ENCODE measurements at regions of chr1 and their contacts with region 1.

Region 1: GRCh38 chr1:1406817-1407635 is at the start of gene MRPL20:
- DNase-seq: peak; percentile 98
- ATAC-seq: peak; percentile 98
- total RNA-seq, gene MRPL20: 140 TPM

Region 2: DNA sequence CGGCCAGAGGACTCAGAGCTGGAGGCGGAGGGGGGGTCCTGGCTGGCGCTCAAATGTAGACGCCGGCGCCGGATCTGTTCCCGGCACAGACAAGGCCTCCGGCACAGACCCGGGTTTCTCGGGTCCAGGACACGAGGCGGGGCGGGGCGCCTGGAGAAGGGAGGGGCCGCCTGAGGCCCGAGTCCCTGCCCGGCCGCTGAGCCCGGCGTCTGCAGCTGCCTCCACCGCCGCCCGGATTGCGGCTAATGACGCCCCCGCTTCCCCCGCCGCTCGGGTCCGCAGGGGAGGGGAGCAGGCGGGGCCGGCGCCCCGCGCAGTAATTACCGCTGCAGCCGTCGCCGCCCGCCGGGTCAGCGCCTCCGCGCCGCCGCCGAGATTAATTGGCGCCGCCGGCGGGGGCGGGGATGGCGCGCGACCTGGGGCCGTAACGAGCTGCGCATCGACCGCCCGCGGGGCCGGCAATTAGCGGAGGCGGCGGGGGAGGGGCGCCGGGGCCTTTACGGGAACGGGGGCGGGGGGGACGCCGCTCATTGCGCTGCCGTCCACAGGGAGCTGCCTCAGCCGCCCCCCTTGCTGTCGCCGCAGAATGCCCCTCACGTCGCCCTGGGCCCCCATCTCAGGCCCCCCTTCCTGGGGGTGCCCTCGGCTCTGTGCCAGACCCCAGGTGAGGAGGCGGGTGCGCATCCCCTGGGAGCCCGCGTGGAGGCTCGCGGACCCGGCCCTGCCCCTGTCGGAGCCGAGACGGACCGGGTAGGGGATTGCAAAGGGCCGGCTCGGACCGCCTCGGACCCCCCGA is 465.2 kb before region 1 on chr1:
- intact Hi-C with region 1: no loop called
- DNase-seq: peak; percentile 88
- ATAC-seq: peak; percentile 36

Region 3: GRCh38 chr1:1441002-1441888 is 34.2 kb after region 1 on chr1:
- intact Hi-C with region 1: loop called (anchors 5 kb)
- DNase-seq: no peak
- ATAC-seq: peak; percentile 82